CD8-positive, alpha-beta memory T cell (primary cell): ENCODE measurements at regions of chr12 and their contacts with region 1.

Region 1: DNA sequence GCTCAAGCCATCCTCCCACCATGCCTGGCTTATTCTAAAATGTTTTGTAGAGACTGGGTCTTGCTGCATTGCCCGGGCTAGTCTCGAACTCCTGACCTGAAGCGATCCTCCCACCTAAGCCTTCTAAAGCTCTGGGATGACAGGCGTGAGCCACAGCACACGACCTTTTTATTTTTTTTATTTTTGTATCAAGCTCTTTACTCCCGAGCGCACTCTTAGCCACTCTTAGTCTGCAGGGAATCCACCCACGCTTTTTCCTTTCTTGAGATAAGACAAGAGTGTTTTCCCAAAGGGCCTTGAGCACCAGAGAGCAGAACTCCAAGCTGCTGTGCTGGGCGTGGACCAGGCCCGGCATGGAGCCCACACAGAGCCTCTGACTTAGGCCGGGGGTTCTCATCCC is 23.4 kb downstream of the MAP1LC3B2 start:
- DNase-seq: no peak
- H3K4me3 ChIP-seq: no peak overlapping the region
- H3K4me3 Mint-ChIP-seq: no peak overlapping the region
- H3K27ac ChIP-seq: no peak overlapping the region
- H3K27ac Mint-ChIP-seq: peak overlapping the region in 1 of 8 donors; percentile 83
- H3K4me1 ChIP-seq: no peaks in the 10 kb centered on the region
- H3K4me1 Mint-ChIP-seq: no peaks in the 10 kb centered on the region
- H3K27me3 ChIP-seq: no peaks in the 10 kb centered on the region
- H3K27me3 Mint-ChIP-seq: peaks cover 3 to 7% of the 10 kb centered on the region in 2 donors

Region 2: GRCh38 chr12:116535241-116535640 is 47.4 kb before region 1 on chr12:
- CTCF ChIA-PET with region 1: no interaction called
- POLR2A ChIA-PET with region 1: interaction called, 14 read pairs
- DNase-seq: no peak
- H3K4me3 ChIP-seq: no peak overlapping the region
- H3K4me3 Mint-ChIP-seq: peak overlapping the region in 5 of 7 donors; percentile 11 to 88 (median 49)
- H3K27ac ChIP-seq: no peak overlapping the region
- H3K27ac Mint-ChIP-seq: peak overlapping the region in 1 of 8 donors; percentile 35
- H3K4me1 ChIP-seq: peaks cover 11% of the 10 kb centered on the region
- H3K4me1 Mint-ChIP-seq: peaks cover 25 to 43% (median 35%) of the 10 kb centered on the region in 3 donors
- H3K27me3 ChIP-seq: no peaks in the 10 kb centered on the region
- H3K27me3 Mint-ChIP-seq: peaks cover 0 to 5% of the 10 kb centered on the region in 2 donors

Region 3: GRCh38 chr12:116673681-116674111 is 91.1 kb after region 1 on chr12:
- CTCF ChIA-PET with region 1: no interaction called
- POLR2A ChIA-PET with region 1: no interaction called
- DNase-seq: no peak
- H3K4me3 ChIP-seq: no peak overlapping the region
- H3K4me3 Mint-ChIP-seq: peak overlapping the region in 4 of 7 donors; percentile 3 to 84 (median 77)
- H3K27ac ChIP-seq: no peak overlapping the region
- H3K27ac Mint-ChIP-seq: peak overlapping the region in 4 of 8 donors; percentile 44 to 83 (median 62)
- H3K4me1 ChIP-seq: peaks cover 26% of the 10 kb centered on the region
- H3K4me1 Mint-ChIP-seq: peaks cover 18 to 40% (median 35%) of the 10 kb centered on the region in 3 donors
- H3K27me3 ChIP-seq: no peaks in the 10 kb centered on the region
- H3K27me3 Mint-ChIP-seq: peaks cover 0 to 5% of the 10 kb centered on the region in 2 donors

Region 4: GRCh38 chr12:116737774-116738700 is 155.4 kb after region 1 on chr12 and contains the starts of genes RNFT2 and SPRING1:
- CTCF ChIA-PET with region 1: no interaction called
- POLR2A ChIA-PET with region 1: no interaction called
- DNase-seq: peak; percentile 99
- H3K4me3 ChIP-seq: peak within 1 kb of the TSS; percentile 94
- H3K4me3 Mint-ChIP-seq: peak within 1 kb of the TSS; percentile 87 to 98 (median 96)
- H3K27ac ChIP-seq: peak within 1 kb of the TSS; percentile 74
- H3K27ac Mint-ChIP-seq: peak within 1 kb of the TSS; percentile 80 to 97 (median 93)
- H3K4me1 ChIP-seq: peaks cover 20% of the 10 kb centered on the region
- H3K4me1 Mint-ChIP-seq: peaks cover 28 to 46% (median 38%) of the 10 kb centered on the region in 3 donors
- H3K27me3 ChIP-seq: no peaks in the 10 kb centered on the region
- H3K27me3 Mint-ChIP-seq: no peaks in the 10 kb centered on the region
- total RNA-seq, gene RNFT2: 14.6 to 15.8 TPM
- total RNA-seq, gene SPRING1: 41.3 to 44.0 TPM